Common myeloid progenitor, CD34-positive (primary cell): ENCODE measurements at regions of chr18 and their contacts with region 1.

Region 1: GRCh38 chr18:12391618-12392165 is 14.7 kb upstream of the AFG3L2 start:
- DNase-seq: peak; percentile 52 to 81 (median 74)
- H3K4me3 ChIP-seq: no peak overlapping the region
- H3K27ac ChIP-seq: no peak overlapping the region
- H3K4me1 ChIP-seq: peaks cover 0 to 4% (median 0%) of the 10 kb centered on the region in 4 experiments
- H3K27me3 ChIP-seq: no peaks in the 10 kb centered on the region

Region 2: DNA sequence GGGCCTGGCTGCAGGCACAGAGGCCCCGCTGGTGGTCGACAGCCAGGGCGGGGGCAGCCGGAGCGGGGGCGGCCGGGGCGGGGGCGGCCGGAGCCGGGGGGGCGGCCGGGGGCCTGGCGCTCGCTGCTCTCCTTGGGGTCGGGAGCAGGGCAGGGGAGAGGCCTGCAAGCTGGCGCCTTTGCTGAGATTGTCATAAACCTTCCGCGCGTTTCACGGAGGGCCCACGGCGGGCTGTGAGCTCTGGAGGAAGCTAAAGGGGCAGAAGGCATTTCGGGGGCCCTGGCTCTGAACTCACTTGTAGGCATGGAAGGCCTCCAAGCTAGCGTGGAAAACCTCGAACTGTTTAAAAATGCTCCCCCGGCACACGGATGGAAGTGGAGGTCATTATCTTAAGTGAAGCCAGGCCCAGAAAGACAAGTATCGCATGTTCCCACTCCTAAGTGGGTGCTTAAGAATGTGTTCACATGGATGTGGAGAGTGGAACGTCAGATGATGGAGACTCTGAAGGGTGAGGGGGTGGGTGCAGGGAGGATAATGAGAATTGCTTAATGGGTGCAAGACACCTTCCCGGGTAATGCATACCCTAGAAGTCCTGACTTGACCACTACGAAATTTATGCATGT is 16.7 kb after region 1 on chr18:
- CTCF ChIA-PET with region 1: interaction called, 72 read pairs
- POLR2A ChIA-PET with region 1: interaction called, 5 read pairs
- DNase-seq: peak in 2 of 3 donors; percentile 46 to 59
- H3K4me3 ChIP-seq: peak overlapping the region in 6 of 7 experiments; percentile 37 to 78 (median 68)
- H3K27ac ChIP-seq: no peak overlapping the region
- H3K4me1 ChIP-seq: peaks cover 0 to 18% (median 10%) of the 10 kb centered on the region in 4 experiments
- H3K27me3 ChIP-seq: no peaks in the 10 kb centered on the region

Region 3: GRCh38 chr18:12420831-12421421 is 29.2 kb after region 1 on chr18:
- CTCF ChIA-PET with region 1: interaction called, 111 read pairs
- POLR2A ChIA-PET with region 1: interaction called, 3 read pairs
- DNase-seq: peak; percentile 52 to 86 (median 76)
- H3K4me3 ChIP-seq: peak overlapping the region; percentile 35 to 89 (median 65)
- H3K27ac ChIP-seq: peak overlapping the region in 1 of 2 experiments; percentile 54
- H3K4me1 ChIP-seq: peaks cover 0 to 31% (median 19%) of the 10 kb centered on the region in 4 experiments
- H3K27me3 ChIP-seq: no peaks in the 10 kb centered on the region

Region 4: DNA sequence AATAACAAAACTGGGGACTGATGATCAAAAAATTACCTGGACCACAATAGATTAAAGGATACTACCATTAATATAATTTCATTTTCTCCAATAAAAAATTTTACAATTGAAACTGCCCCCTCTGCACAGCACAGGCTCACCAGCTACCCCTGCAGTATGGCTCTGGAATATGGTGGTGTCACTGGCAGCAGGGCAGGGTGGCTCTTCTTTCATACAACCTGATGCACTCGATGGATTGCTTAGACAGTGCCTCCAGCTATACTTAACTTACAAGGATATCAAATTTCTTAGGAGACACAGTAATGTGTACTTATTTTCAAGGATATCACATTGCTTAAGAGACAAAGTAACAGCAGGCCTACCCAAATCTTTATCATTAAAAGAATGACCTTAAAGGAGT is 140.1 kb after region 1 on chr18:
- CTCF ChIA-PET with region 1: interaction called, 35 read pairs
- POLR2A ChIA-PET with region 1: no interaction called
- DNase-seq: no peak
- H3K4me3 ChIP-seq: no peak overlapping the region
- H3K27ac ChIP-seq: no peak overlapping the region
- H3K4me1 ChIP-seq: no peaks in the 10 kb centered on the region
- H3K27me3 ChIP-seq: no peaks in the 10 kb centered on the region

Region 5: DNA sequence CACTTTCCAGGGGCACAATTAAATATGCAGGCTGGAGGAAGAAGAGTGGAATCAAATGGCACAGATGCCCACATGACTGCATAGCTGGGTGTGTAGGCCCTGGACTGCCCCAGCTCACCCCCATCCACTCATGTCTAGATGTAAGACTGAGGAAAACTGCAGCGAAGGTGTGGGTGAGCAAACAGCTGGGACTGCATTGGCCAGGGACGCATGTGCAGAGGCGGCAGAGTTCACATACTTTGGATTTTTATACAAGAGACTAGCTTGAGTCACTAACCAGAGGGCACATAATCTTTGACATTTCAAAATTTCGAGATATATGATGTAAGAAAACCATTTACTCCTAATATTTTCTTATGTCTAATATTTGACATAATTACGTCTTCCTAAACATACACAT is 206.1 kb after region 1 on chr18:
- CTCF ChIA-PET with region 1: no interaction called
- POLR2A ChIA-PET with region 1: no interaction called
- DNase-seq: no peak
- H3K4me3 ChIP-seq: no peak overlapping the region
- H3K27ac ChIP-seq: peak overlapping the region in 1 of 2 experiments; percentile 1
- H3K4me1 ChIP-seq: peaks cover 8 to 60% (median 30%) of the 10 kb centered on the region in 4 experiments
- H3K27me3 ChIP-seq: no peaks in the 10 kb centered on the region

Region 6: GRCh38 chr18:12630136-12630535 is 238.4 kb after region 1 on chr18:
- CTCF ChIA-PET with region 1: no interaction called
- POLR2A ChIA-PET with region 1: no interaction called
- DNase-seq: no peak
- H3K4me3 ChIP-seq: no peak overlapping the region
- H3K27ac ChIP-seq: no peak overlapping the region
- H3K4me1 ChIP-seq: peaks cover 0 to 9% (median 2%) of the 10 kb centered on the region in 4 experiments
- H3K27me3 ChIP-seq: no peaks in the 10 kb centered on the region

Region 7: DNA sequence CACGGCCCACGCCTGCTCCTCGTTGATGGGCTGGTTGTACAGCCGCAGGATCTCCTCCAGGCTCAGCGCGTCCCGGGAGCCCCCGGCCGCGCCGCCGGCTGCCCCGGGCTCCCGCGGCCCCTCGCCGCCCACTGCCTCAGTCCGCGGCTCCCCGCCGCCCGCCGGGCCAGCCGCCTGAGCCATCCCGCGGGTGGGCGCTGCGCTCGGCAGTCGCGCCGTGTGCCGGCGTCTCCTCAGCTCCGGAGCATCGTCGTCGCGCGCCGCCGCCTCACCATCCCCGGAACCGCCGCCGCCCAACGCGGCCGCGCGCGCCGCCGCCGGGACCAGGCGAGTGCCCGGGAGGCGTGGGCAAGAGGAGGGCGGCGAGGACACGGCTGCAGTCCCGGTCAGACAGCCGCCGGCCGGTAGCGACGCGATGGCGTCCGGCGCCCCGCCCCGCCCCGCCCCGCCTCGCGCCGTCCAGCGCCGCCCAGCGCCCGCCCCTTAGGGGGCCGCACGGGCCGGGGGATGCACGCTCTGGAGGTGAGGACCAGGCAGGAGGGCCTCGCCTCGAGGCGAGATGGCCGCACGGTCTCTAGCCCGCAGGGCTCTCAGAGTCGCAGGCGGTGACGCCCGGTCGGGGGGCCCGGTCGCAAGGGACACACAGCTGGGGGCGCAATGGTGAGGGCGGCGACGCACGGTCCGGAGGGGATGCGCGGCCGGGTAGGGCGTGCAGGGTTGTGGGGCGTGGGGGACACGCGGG is 266.2 kb after region 1 on chr18 and contains the start of gene SPIRE1:
- CTCF ChIA-PET with region 1: interaction called, 111 read pairs
- POLR2A ChIA-PET with region 1: no interaction called
- DNase-seq: peak; percentile 18 to 62 (median 45)
- H3K4me3 ChIP-seq: peak within 1 kb of the TSS; percentile 60 to 82 (median 71)
- H3K27ac ChIP-seq: peak within 1 kb of the TSS in 1 of 2 experiments; percentile 44
- H3K4me1 ChIP-seq: peaks cover 4 to 27% (median 12%) of the 10 kb centered on the region in 4 experiments
- H3K27me3 ChIP-seq: peaks cover 0 to 2% (median 0%) of the 10 kb centered on the region in 5 experiments